ENCODE measurements at regions of chr17 and their contacts with region 1.

Region 1: DNA sequence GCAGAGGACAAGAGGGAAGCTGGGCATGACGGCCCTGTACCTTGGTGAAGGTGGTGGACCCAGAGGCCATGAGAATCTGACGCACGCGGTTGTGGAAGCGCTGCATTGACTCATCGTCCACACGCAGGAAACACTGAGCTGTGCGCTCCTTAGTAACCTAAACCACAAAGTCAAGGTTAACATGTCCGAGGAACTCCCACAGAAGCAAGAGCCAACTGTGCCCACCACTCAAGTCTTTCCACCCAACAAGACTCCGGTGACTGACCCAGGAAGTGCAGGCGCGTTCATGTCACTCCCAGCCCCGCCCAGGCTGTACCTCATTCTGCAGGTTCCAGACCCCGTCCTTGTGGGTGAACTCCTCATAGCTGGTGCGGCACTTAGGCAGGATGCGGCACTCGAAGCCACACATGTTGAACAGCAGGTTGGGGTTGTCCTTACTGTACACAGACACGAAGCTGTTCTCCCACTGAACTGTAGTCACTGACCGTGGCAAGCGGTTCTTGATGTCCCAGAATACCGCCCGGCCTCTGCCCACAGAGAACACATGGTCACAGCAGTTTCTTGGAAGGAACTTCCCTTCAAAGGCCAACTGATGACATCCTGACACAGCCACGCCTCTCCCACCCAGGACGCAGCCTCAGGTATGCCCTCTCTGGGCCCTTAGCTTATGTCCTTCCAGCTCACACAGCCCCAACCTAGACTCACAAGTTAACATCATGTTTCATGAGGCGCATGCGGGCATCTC is 11.5 kb downstream of the PRPF8 start:
- DNase-seq: peak in 1 of 2 donors; percentile 32
- ATAC-seq: no peak
- H3K4me3 ChIP-seq: no peak overlapping the region
- H3K27ac ChIP-seq: no peak overlapping the region
- H3K4me1 ChIP-seq: peaks cover 10% of the 10 kb centered on the region
- H3K27me3 ChIP-seq: no peaks in the 10 kb centered on the region
- CTCF ChIP-seq: no peak

Region 2: GRCh38 chr17:1628856-1629646 is 44.2 kb before region 1 on chr17:
- intact Hi-C with region 1: no loop called
- DNase-seq: peak; percentile 94 to 97
- ATAC-seq: peak; percentile 80 to 85 (median 83)
- H3K4me3 ChIP-seq: peak overlapping the region; percentile 93
- H3K27ac ChIP-seq: peak overlapping the region; percentile 92
- H3K4me1 ChIP-seq: peaks cover 29% of the 10 kb centered on the region
- H3K27me3 ChIP-seq: no peaks in the 10 kb centered on the region
- CTCF ChIP-seq: peak; percentile 54

Region 3: DNA sequence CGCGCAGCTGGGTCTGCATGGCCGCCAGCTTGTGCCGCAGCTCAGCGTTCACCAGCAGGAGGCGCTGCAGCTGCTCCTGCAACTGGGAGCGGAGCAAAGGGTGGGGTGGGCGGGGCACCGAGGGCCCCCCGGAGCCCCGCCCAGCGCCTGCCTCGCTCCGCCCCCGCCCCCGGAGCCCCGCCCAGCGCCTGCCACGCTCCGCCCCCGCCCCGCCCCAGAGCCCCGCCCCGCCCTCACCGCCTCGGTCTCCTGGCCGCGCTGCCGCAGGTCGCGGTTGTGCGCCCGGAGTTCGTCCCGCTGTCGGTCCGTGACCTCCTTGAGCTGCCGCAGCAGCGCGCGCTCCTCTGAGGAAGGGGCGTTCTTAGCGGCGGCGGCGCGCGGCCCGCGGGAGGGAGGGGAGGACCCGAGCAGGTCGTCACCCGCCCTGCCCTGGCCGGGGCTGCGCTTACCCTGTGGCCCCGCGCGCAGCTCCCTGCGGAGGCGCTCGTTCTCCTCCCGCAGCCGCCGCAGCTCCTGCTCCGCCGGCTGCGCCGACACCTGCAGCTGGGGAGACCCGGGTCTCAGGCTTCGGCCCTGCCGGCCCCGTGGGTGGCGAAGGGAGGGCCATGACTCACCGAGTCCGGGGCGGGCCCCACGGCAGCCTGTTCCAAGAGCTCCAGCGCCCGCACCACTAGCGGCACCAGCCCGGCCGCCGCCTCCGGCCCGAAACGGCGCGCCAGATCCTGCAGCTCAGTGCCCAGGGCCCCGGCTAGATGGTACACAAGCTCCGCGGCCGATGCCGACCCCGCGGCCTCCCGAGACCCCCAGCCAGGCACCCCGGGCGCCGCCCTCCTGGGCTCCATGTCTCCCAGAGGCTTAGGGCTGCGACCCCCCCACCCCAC is 24.0 kb before region 1 on chr17:
- intact Hi-C with region 1: loop called in 1 of 2 experiments (anchors 2 kb)
- DNase-seq: peak; percentile 96 to 98
- ATAC-seq: peak; percentile 69 to 76 (median 74)
- H3K4me3 ChIP-seq: peak overlapping the region; percentile 90
- H3K27ac ChIP-seq: peak overlapping the region; percentile 100
- H3K4me1 ChIP-seq: peaks cover 25% of the 10 kb centered on the region
- H3K27me3 ChIP-seq: no peaks in the 10 kb centered on the region
- CTCF ChIP-seq: peak; percentile 85

Region 4: DNA sequence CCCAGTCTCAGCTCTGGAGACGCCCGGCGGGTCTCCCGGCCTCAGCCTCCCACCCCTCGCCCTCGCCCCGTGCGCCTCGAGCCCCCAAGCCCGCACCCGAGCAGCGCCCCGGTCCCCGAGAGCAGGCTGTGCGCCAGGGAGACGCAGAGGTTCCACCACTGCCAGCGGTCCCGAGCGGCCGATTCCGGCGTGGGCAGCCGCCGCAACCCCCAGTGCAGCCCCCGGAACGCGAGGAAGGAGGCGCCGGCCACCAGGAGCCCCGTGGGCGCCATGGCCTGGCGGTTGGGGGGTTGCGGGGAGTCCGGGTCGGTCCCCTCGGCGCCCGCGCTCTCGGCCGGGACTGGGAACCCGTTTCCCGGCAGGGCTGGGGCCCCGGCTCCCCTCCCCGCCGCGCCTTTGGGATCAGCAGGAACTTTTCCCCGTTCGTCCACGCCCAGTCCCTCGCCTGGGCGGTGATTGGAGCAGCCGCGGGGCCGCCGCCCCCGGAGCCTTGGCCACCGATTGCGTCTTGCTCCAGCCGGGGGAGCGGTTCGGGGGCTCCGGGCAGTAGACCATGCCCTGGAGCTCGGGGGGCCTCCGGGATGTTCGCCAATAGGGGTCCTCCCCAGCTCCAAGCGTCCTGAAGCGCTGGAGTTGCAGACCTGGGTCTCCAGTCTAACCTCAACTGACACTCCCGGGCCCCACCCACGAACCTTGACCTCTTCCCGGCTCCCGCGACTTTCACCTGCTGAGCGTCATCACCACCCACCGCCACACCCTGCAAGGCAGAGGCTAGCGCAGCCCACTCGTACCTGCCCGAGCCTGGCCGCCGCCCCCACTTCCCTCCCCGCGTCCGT is 37.0 kb after region 1 on chr17 and contains the start of gene TLCD2:
- intact Hi-C with region 1: loop called (anchors 1 to 5 kb)
- DNase-seq: peak; percentile 83 to 85
- ATAC-seq: peak; percentile 26 to 47 (median 34)
- H3K4me3 ChIP-seq: peak within 1 kb of the TSS; percentile 97
- H3K27ac ChIP-seq: peak within 1 kb of the TSS; percentile 71
- H3K4me1 ChIP-seq: peaks cover 37% of the 10 kb centered on the region
- H3K27me3 ChIP-seq: no peaks in the 10 kb centered on the region
- CTCF ChIP-seq: no peak
- total RNA-seq, gene TLCD2: 1.6 to 2.9 (median 1.9) TPM

Region 5: GRCh38 chr17:1716076-1716995 is 43.1 kb after region 1 on chr17:
- intact Hi-C with region 1: loop called in 1 of 2 experiments (anchors 5 kb)
- DNase-seq: peak; percentile 100
- ATAC-seq: peak; percentile 59 to 62 (median 62)
- H3K4me3 ChIP-seq: peak overlapping the region; percentile 97
- H3K27ac ChIP-seq: peak overlapping the region; percentile 100
- H3K4me1 ChIP-seq: peaks cover 55% of the 10 kb centered on the region
- H3K27me3 ChIP-seq: no peaks in the 10 kb centered on the region
- CTCF ChIP-seq: no peak

Region 6: DNA sequence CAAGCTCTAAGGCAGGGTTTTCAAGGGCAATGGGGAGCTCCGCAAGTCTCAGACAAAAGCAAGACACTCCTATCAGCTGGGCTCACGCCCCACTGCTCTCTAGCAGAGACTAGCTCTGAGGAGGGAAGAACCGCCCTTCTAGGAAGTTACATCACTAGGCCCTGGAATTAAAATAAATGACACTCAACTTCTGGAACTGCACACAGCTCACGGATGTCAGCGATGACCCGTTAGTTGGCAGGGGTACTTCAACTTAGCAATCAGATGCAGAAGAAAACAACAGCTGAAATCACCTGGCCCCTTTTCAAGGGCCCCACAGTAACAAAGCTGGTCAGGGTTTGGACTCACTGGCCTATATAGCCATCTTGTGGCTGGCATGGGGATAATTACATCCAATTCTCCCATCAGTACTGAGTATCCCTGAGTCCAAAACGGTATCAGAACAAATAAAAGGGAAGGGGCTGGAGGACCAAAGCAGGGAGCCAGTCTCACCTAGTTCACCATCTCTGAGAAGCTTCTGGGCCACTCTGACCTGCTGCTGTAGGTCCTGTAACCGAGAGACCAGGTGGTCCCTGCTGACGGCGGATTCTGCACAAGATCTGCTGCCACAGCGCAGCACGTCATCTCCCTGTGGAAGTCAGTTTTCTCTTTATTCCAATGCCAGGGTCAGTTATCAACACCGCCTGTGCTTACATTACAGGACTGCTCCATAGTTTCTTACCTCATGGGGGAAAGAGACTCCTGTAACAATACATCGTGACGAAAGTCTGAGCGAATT is 110.8 kb after region 1 on chr17:
- intact Hi-C with region 1: loop called (anchors 1 to 5 kb)
- DNase-seq: peak; percentile 87 to 93
- ATAC-seq: peak; percentile 84 to 85 (median 85)
- H3K4me3 ChIP-seq: peak overlapping the region; percentile 58
- H3K27ac ChIP-seq: peak overlapping the region; percentile 99
- H3K4me1 ChIP-seq: peaks cover 72% of the 10 kb centered on the region
- H3K27me3 ChIP-seq: no peaks in the 10 kb centered on the region
- CTCF ChIP-seq: peak; percentile 82